ENCODE measurements at regions of chr18 and their contacts with region 1.

Region 1: GRCh38 chr18:74353169-74353775 is 37.6 kb downstream of the C18orf63 start:
- DNase-seq: no peak
- ATAC-seq: peak; percentile 81 to 90
- H3K4me3 ChIP-seq: no peak overlapping the region
- H3K27ac ChIP-seq: no peak overlapping the region
- H3K4me1 ChIP-seq: no peaks in the 10 kb centered on the region
- H3K27me3 ChIP-seq: no peaks in the 10 kb centered on the region
- CTCF ChIP-seq: peak; percentile 68

Region 2: GRCh38 chr18:74251297-74252038 is 101.8 kb before region 1 on chr18:
- intact Hi-C with region 1: no loop called
- DNase-seq: no peak
- ATAC-seq: peak in 1 of 2 donors; percentile 50
- H3K4me3 ChIP-seq: no peak overlapping the region
- H3K27ac ChIP-seq: peak overlapping the region; percentile 70
- H3K4me1 ChIP-seq: peaks cover 62% of the 10 kb centered on the region
- H3K27me3 ChIP-seq: no peaks in the 10 kb centered on the region
- CTCF ChIP-seq: no peak

Region 3: GRCh38 chr18:74412116-74412880 is 59.0 kb after region 1 on chr18:
- intact Hi-C with region 1: no loop called
- DNase-seq: no peak
- ATAC-seq: no peak
- H3K4me3 ChIP-seq: no peak overlapping the region
- H3K27ac ChIP-seq: no peak overlapping the region
- H3K4me1 ChIP-seq: no peaks in the 10 kb centered on the region
- H3K27me3 ChIP-seq: peaks cover 16% of the 10 kb centered on the region
- CTCF ChIP-seq: no peak

Region 4: DNA sequence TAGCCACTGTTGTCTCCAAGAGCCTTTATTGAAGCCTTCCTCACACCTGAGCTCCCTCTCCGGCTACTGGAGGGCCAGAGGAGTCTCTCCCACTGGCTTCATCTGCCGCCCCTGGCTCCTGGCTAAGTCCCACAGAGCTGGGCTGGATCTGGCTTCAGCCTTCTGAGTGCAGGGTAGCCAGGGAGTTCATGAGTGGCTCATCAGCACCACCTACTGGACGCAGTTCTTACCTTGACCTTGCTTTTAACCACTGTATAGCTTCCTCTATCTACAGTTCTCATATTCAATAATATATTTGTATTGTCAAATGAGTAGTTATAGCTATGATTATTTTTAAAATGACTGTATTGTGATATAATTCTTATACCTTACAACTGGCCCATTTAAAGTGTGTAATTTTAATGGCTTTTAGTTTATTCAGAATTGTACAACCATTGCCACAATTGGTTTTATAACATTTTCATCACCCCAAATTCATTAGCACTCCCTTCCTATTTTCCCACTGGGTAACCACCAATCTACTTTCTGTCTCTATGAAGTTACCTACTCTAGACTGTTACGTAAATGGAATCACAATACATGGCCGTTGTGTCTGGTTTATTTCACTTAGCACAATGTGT is 198.8 kb after region 1 on chr18:
- intact Hi-C with region 1: loop called (anchors 5 kb)
- DNase-seq: peak; percentile 81
- ATAC-seq: peak; percentile 94 to 97
- H3K4me3 ChIP-seq: no peak overlapping the region
- H3K27ac ChIP-seq: no peak overlapping the region
- H3K4me1 ChIP-seq: peaks cover 9% of the 10 kb centered on the region
- H3K27me3 ChIP-seq: no peaks in the 10 kb centered on the region
- CTCF ChIP-seq: peak; percentile 88